ENCODE measurements at regions of chr16 and their contacts with region 1.

Region 1: DNA sequence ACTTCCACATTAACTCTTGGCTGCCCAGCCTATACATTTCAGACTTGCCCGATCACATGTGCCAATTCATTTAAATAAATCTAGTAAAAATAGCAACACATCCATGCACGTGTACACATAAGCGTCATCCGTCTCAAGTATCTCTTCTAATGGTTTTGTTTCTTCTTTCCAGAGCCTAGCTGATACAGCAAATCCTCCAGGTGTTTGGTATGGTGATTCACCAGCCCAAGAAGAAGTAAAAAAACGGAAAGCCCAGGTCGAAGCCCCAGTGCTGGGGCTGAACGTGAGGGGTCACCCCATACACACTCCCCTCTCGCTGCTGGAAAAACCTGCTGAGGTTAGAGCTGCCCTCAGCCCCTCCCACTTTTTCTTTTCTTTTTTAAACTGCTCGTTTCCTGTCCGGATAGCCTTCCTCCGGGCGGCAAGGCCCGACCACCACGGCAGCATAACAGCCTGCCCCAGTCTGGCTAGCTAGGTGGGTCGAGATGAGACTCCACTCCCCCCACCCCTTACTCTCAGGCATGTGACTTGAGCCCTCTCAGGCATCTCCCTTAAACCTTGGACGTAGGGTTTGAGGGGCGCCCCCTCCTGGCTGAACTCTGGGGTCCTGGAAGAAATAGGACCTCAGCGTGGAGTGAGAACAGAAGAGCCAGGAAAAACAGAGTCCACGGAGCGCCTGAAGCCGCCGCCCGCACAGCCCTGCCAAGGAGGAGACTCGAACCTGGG is 13.9 kb upstream of the OR1F1 start:
- DNase-seq: peak in 1 of 2 experiments; percentile 95
- H3K4me3 ChIP-seq: peak overlapping the region; percentile 28 to 71 (median 34); a peak in 5 of 8 replicates
- H3K27ac ChIP-seq: no peak overlapping the region
- H3K4me1 ChIP-seq: peaks cover 0 to 10% (median 6%) of the 10 kb centered on the region in 4 experiments; a peak in 5 of 7 replicates
- H3K27me3 ChIP-seq: peaks cover 0 to 25% (median 15%) of the 10 kb centered on the region in 4 experiments; a peak in 5 of 7 replicates
- CTCF ChIP-seq: peak; percentile 63 to 75 (median 72)
- EP300 ChIP-seq: no peak
- POLR2A ChIP-seq: no peak
- RAD21 ChIP-seq: no peak; a peak in 1 of 4 replicates

Region 2: GRCh38 chr16:2990891-2991290 is 183.2 kb before region 1 on chr16:
- CTCF ChIA-PET with region 1: no interaction called
- POLR2A ChIA-PET with region 1: no interaction called
- DNase-seq: no peak
- H3K4me3 ChIP-seq: no peak overlapping the region
- H3K27ac ChIP-seq: no peak overlapping the region
- H3K4me1 ChIP-seq: peaks cover 0 to 28% (median 18%) of the 10 kb centered on the region in 4 experiments; a peak in 6 of 7 replicates
- H3K27me3 ChIP-seq: no peaks in the 10 kb centered on the region; a peak in 1 of 7 replicates
- CTCF ChIP-seq: no peak
- EP300 ChIP-seq: no peak
- POLR2A ChIP-seq: no peak
- RAD21 ChIP-seq: no peak

Region 3: DNA sequence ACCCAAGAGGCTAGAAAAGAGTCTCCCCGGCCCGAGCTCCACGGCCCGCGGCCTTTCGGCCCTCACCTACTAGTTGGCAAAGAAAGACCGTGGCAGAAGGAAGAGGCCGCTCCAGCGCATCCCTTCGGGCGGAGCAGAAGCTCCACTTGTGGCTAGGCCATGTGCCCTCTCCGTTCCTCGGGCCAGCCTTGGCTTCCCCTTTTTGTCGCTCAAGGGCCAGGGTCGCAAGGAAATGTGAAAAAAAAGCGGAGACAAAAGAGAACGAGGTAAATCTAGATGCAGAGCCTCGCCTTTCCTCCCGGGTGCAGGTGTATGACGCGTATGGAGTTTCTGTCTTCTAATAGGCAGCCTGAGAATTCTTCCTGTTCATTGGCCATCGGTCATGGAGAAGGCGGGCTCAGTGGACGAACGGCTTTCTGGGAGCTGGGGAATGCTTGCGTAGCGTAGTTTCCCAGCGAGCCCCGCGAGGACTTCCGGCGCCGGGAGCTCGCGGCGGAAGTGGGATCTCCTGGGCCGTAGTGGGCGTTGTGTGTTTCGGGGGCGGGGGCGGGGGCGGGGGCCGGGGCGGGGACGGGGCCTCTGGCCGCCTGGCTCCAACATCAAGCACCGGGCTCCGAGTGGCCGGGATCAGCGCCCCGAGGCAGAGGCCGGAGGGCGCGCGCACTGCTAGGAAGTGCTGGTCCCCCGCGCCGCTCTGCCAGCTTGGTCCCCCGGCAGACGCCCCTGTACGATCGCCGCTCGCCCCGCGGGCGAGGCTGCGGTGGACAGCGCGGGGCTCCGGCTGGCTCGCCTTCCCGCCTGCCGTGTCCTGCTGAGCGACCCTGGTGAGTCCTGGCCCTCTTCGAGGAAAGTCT is 39.3 kb before region 1 on chr16 and contains the start of gene ZNF213:
- CTCF ChIA-PET with region 1: interaction called, 18 read pairs
- POLR2A ChIA-PET with region 1: interaction called, 6 read pairs
- DNase-seq: peak; percentile 88 to 93
- H3K4me3 ChIP-seq: peak within 1 kb of the TSS; percentile 86 to 96 (median 90)
- H3K27ac ChIP-seq: peak within 1 kb of the TSS; percentile 97
- H3K4me1 ChIP-seq: peaks cover 0 to 2% (median 0%) of the 10 kb centered on the region in 4 experiments; a peak in 1 of 7 replicates
- H3K27me3 ChIP-seq: no peaks in the 10 kb centered on the region
- CTCF ChIP-seq: no peak
- EP300 ChIP-seq: no peak
- POLR2A ChIP-seq: peak in 1 of 2 experiments; percentile 92; a peak in 2 of 3 replicates
- RAD21 ChIP-seq: no peak
- total RNA-seq, gene ZNF213: 6.9 and 7.3 TPM in 2 replicates

Region 4: DNA sequence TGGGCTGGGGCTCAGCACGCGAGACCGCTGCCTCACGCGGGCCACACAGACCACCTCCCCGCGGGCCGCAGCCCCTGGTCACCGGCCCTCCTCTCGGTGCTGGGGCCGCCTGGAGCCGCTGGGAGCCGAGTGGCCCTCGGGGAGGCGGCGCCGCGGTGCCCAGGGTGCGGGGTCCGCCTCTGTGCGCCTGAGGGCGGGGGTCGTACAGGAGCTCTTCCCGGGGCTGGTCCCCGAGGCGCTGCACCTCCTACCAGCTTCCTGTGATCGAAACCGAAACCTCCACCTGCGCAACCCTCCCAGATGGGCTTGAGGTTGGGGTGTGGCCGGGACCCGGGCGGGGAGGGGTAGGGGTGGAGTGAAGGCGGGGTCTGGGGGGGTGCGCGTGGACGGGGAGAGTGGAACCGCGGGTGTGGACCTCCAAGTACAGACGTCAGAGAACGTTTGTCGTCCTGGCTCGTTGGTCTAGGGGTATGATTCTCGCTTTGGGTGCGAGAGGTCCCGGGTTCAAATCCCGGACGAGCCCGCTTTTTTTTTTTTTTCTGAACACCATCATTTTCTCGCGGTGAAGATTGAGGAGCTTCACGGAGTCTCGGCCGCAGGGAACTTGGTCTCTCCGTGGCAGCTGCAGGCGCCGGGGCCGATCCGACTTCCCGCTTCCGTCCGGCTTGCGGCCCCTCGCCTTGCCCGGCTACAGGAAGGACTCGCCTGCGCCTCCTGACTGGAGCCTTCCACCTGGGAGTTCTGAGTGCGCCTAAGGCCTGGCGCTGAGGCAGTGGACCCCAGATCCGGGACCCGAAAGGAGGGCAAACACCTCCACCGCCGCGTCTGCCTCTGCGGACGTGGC is 15.4 kb before region 1 on chr16:
- CTCF ChIA-PET with region 1: interaction called, 22 read pairs
- POLR2A ChIA-PET with region 1: interaction called, 20 read pairs
- DNase-seq: peak in 1 of 2 experiments; percentile 84
- H3K4me3 ChIP-seq: peak overlapping the region; percentile 65 to 92 (median 76)
- H3K27ac ChIP-seq: no peak overlapping the region
- H3K4me1 ChIP-seq: peaks cover 0 to 7% (median 4%) of the 10 kb centered on the region in 4 experiments; a peak in 3 of 7 replicates
- H3K27me3 ChIP-seq: peaks cover 0 to 10% (median 7%) of the 10 kb centered on the region in 4 experiments; a peak in 5 of 7 replicates
- CTCF ChIP-seq: no peak
- EP300 ChIP-seq: 0 out of 3 replicates have a peak, but pooled peaks of 1 of the 2 experiments have one; percentile 5
- POLR2A ChIP-seq: 0 out of 3 replicates have a peak, but pooled peaks of 1 of the 2 experiments have one; percentile 18
- RAD21 ChIP-seq: no peak

Region 5: GRCh38 chr16:3188925-3189825 is 15.1 kb after region 1 on chr16:
- CTCF ChIA-PET with region 1: interaction called, 35 read pairs
- POLR2A ChIA-PET with region 1: interaction called, 28 read pairs
- DNase-seq: peak in 1 of 2 experiments; percentile 96
- H3K4me3 ChIP-seq: peak overlapping the region; percentile 93 to 99 (median 94)
- H3K27ac ChIP-seq: no peak overlapping the region
- H3K4me1 ChIP-seq: peaks cover 0 to 5% (median 0%) of the 10 kb centered on the region in 4 experiments; a peak in 2 of 7 replicates
- H3K27me3 ChIP-seq: peaks cover 5 to 17% (median 14%) of the 10 kb centered on the region in 4 experiments
- CTCF ChIP-seq: no peak
- EP300 ChIP-seq: no peak
- POLR2A ChIP-seq: no peak
- RAD21 ChIP-seq: no peak